Gastrocnemius medialis (tissue), 4 donors: ENCODE measurements at regions of chr11 and their contacts with region 1.

Region 1: GRCh38 chr11:107840129-107840484 is 18.5 kb downstream of the SLC35F2 start:
- DNase-seq: peak; percentile 10 to 28
- ATAC-seq: peak; percentile 42 to 47
- H3K4me3 ChIP-seq: peak overlapping the region in 1 of 4 donors; percentile 6
- H3K27ac ChIP-seq: peak overlapping the region; percentile 21 to 77 (median 76)
- H3K4me1 ChIP-seq: peaks cover 3 to 5% of the 10 kb centered on the region in 2 donors
- H3K27me3 ChIP-seq: no peaks in the 10 kb centered on the region
- CTCF ChIP-seq: no peak
- POLR2A ChIP-seq: no peak

Region 2: DNA sequence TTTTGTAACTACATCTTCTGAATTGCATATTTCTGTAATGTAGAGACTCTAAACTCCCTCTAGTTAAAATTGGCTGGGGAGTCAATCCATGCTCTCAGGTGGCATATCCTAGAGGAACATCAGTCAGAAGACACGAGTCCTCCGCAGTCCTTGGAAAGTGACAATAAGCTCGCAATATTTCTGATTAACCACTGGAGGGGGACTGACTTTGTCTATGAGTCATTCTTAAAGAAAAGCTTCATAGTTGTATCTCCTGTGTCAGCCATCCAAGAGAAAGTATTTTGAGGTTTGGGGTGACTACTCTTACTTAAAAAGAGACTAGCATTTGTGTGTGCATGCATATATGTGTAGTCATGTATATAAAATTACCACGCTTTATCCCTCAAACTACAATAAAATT is 188.4 kb before region 1 on chr11:
- in situ Hi-C with region 1: no loop called
- intact Hi-C with region 1: no loop called
- DNase-seq: no peak
- ATAC-seq: no peak
- H3K4me3 ChIP-seq: no peak overlapping the region
- H3K27ac ChIP-seq: no peak overlapping the region
- H3K4me1 ChIP-seq: no peaks in the 10 kb centered on the region
- H3K27me3 ChIP-seq: no peaks in the 10 kb centered on the region
- CTCF ChIP-seq: no peak
- POLR2A ChIP-seq: no peak

Region 3: DNA sequence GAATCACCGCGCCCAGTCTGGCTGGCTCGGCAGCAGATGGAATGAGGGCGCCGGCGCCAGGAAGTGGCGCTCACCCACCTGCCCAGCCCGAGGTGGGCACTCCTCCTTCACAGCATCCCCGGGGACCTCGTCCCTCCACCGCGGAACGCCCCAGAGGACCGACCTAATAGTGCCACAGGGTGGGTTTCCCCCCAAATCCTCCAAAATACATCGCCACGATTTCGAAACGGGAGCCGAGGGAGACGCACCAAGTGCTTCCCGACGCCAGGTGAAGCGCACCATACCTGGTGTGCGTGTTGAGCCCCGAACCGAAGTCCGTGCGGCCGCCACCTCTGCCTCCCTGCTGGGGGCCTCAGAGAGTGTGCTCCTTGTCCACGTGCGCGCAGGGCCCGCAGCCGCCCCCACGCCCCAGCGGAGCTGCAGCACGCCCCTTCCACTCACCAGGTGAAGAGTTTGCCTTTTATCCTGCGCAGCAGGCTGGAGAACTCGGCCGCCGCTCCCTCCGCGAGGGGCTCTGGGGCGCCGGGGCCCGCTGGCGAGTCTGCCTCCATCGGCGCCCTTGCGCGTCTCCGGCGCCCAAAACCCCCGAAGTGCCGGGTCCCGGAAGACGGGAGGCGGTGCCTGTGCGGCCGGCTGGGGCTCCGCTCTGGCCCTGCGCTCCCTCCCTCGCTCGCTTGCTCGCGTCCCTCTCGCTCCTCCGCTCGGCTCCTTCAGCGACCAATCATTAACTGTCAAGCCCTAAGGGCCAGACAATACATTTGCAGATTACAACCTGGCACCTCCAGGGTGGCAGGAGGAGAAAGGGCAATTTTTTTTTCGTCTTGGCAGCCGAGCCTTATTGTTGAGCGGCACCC is 18.3 kb after region 1 on chr11 and contains the start of gene SLC35F2:
- in situ Hi-C with region 1: no loop called
- intact Hi-C with region 1: loop called (anchors 2 kb)
- DNase-seq: peak in 1 of 2 donors; percentile 13
- ATAC-seq: peak; percentile 78 to 81
- H3K4me3 ChIP-seq: peak within 1 kb of the TSS; percentile 53 to 69 (median 63)
- H3K27ac ChIP-seq: peak within 1 kb of the TSS; percentile 6 to 51 (median 36)
- H3K4me1 ChIP-seq: peaks cover 0 to 22% of the 10 kb centered on the region in 2 donors
- H3K27me3 ChIP-seq: no peaks in the 10 kb centered on the region
- CTCF ChIP-seq: no peak
- POLR2A ChIP-seq: no peak
- total RNA-seq, gene SLC35F2: 1.3 to 5.4 (median 1.7) TPM